Activated B cell treated with CpG ODN at 0.5 μM for 24 hours (primary cell): ENCODE measurements at regions of chr3 and their contacts with region 1.

Region 1: DNA sequence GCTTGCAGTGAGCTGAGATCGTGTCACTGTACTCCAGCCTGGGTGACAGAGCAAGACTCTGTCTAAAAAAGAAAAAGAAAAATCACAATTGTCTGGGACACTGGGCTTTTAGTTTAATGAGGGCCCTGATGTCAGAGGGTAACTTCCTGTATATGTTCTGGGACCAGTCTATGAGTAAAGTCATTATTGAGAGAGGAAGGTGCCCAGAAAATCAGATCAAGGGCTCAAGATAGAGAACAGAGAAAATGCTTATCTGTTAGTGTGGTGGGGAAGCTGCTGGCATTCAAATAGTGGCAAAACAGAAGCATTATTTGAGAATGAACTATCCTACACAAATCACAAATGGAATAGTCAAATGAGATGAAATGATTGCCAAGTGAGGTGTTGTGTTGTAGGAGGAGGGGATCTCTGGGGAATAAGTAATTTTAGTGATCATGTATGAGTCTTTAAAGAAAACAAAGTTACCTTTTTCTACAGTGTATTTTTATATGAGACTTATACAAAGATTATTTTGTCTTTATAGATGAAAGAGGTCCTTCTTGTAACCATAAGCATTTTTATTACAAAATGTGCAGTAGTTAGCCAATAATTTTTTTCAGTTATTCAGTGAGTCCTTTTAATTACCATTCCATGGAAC is 13.4 kb downstream of the ARIH2 start:
- DNase-seq: no peak
- ATAC-seq: no peak
- H3K4me3 Mint-ChIP-seq: no peak overlapping the region
- H3K27ac Mint-ChIP-seq: no peak overlapping the region
- H3K4me1 Mint-ChIP-seq: peaks cover 42% of the 10 kb centered on the region
- H3K27me3 Mint-ChIP-seq: no peaks in the 10 kb centered on the region
- CTCF ChIP-seq: no peak

Region 2: DNA sequence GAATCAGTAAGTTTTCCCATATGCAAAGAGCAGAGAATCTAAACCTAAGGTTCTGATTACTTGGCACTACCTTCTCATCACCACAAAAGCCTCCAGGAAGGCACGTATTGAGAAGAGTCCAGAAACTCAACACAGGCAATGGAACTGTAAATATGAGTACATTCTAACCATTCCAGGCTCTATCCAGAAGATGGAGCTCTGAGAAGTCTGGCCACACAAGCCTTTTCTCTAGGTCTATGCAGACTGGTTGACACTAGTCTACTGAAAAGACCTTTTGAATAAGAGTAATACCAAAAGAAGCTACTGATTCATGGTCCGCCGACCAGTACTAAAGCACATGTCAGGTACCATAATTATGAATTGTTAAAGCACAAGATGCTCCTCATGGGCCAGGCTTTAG is 234.1 kb before region 1 on chr3:
- CTCF ChIA-PET with region 1: no interaction called
- POLR2A ChIA-PET with region 1: interaction called, 16 read pairs
- intact Hi-C with region 1: no loop called
- DNase-seq: no peak
- ATAC-seq: no peak
- H3K4me3 Mint-ChIP-seq: no peak overlapping the region
- H3K27ac Mint-ChIP-seq: no peak overlapping the region
- H3K4me1 Mint-ChIP-seq: peaks cover 15% of the 10 kb centered on the region
- H3K27me3 Mint-ChIP-seq: no peaks in the 10 kb centered on the region
- CTCF ChIP-seq: no peak